SK-N-SH (cell line): ENCODE measurements at regions of chr5 and their contacts with region 1.

Region 1: GRCh38 chr5:75236322-75237316 is at the start of gene ANKRD31:
- DNase-seq: peak; percentile 96
- H3K4me3 ChIP-seq: peak within 1 kb of the TSS; percentile 73 to 92
- H3K27ac ChIP-seq: peak within 1 kb of the TSS in 1 of 2 experiments; percentile 80; a peak in 2 of 4 replicates
- H3K4me1 ChIP-seq: peaks cover 0 to 9% of the 10 kb centered on the region in 2 experiments; a peak in 1 of 4 replicates
- H3K27me3 ChIP-seq: no peaks in the 10 kb centered on the region
- CTCF ChIP-seq: peak; percentile 75
- EP300 ChIP-seq: 0 out of 4 replicates have a peak, but pooled peaks of 1 of the 2 experiments have one; percentile 10
- RAD21 ChIP-seq: peak; percentile 70
- polyA plus RNA-seq, gene ANKRD31: 0.05 and 0.06 TPM in 2 replicates

Region 2: DNA sequence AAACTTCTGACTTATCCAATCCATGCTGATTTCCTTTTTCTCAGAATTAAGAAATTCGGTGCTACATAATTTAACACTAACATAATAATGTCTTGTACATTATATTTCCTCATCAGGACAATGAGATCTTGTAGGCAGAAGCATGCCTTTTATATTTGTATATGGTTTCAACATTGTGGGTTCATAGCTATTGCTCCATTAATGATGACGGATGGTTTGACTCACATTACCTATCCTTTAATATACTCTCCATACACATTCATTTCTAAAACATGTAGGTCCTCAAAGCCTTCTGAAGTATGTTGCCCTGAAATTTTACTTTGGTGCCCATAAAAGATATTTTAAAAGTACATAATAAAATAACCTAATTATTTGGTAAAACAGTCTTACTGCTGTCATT is 123.3 kb before region 1 on chr5:
- CTCF ChIA-PET with region 1: no interaction called
- POLR2A ChIA-PET with region 1: no interaction called
- DNase-seq: no peak
- H3K4me3 ChIP-seq: no peak overlapping the region
- H3K27ac ChIP-seq: no peak overlapping the region
- H3K4me1 ChIP-seq: no peaks in the 10 kb centered on the region
- H3K27me3 ChIP-seq: no peaks in the 10 kb centered on the region
- CTCF ChIP-seq: no peak
- EP300 ChIP-seq: no peak
- RAD21 ChIP-seq: no peak

Region 3: DNA sequence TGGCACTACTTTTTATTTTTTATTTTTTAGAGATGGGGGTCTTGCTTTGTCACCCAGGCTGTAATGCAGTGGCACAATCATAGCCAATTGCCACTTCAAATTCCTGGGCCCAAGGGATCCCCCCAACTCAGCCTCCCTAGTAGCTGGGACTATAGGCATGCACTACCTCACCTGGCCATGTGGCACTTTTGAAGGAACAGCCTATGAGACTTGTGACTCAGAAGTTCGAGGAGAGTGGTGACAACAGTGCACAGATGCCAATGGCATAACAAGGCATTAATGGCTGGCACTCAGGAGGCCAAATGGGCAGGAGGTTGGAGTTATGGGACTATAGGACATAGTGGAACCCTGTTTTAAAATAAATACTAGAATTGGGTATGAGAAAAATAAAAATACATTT is 33.7 kb before region 1 on chr5:
- CTCF ChIA-PET with region 1: no interaction called
- POLR2A ChIA-PET with region 1: no interaction called
- DNase-seq: no peak
- H3K4me3 ChIP-seq: no peak overlapping the region
- H3K27ac ChIP-seq: no peak overlapping the region
- H3K4me1 ChIP-seq: no peaks in the 10 kb centered on the region
- H3K27me3 ChIP-seq: no peaks in the 10 kb centered on the region
- CTCF ChIP-seq: no peak
- EP300 ChIP-seq: no peak
- RAD21 ChIP-seq: no peak

Region 4: GRCh38 chr5:75336625-75337339 is 100.2 kb after region 1 on chr5 and contains the start of gene HMGCR:
- CTCF ChIA-PET with region 1: interaction called, 24 read pairs
- POLR2A ChIA-PET with region 1: interaction called, 7 read pairs
- DNase-seq: peak; percentile 92
- H3K4me3 ChIP-seq: peak within 1 kb of the TSS; percentile 70 to 90
- H3K27ac ChIP-seq: peak within 1 kb of the TSS; percentile 75 to 98
- H3K4me1 ChIP-seq: peaks cover 0 to 9% of the 10 kb centered on the region in 2 experiments; a peak in 2 of 4 replicates
- H3K27me3 ChIP-seq: no peaks in the 10 kb centered on the region
- CTCF ChIP-seq: peak; percentile 39
- EP300 ChIP-seq: 0 out of 4 replicates have a peak, but pooled peaks of 1 of the 2 experiments have one; percentile 29
- RAD21 ChIP-seq: peak; percentile 65
- polyA plus RNA-seq, gene HMGCR: 8.2 and 11.0 TPM in 2 replicates